ENCODE measurements at regions of chr11 and their contacts with region 1.

Region 1: DNA sequence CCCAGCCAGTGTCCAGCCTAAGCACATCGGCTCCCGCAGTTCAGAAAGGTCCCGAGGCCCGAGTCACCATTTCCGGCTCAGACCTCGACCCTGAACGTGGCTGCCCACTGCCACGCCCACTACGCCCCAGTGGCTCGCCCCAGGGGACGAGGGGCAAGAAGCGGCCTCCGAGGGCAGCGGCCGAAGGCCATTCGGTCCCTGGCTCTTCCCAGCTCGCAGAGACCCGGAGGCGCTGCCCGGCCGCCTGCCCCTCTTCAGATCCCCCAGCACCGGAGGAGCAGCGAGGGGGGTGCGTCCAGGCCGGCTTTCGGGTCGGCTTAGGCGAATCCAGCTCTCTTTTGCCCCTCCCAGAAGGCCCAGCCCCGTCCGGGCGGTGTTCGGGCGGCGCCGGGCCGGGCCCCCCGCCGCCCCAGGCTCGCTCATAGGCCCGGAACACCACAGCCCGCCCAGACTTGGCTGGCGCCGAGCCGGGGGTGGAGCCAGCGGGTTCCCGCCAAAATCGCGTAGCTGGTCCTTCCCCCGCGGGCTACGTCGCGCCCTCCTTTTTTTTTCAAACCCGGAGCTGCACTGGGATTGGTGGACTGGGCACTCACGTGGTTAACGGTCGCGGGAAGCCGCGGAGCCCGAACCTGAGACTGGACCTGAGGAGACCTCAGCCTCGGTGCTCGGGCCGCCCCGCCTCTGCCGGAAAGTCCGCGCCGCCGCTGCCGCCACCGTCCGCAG is at the start of gene WEE1:
- DNase-seq: peak; percentile 99
- H3K4me3 ChIP-seq: peak within 1 kb of the TSS; percentile 64 to 87 (median 86)
- H3K27ac ChIP-seq: peak within 1 kb of the TSS; percentile 95 to 99 (median 97)
- H3K4me1 ChIP-seq: peaks cover 0 to 39% (median 28%) of the 10 kb centered on the region in 4 donors
- H3K27me3 ChIP-seq: no peaks in the 10 kb centered on the region
- CTCF ChIP-seq: no peak
- EP300 ChIP-seq: no peak
- POLR2A ChIP-seq: peak; percentile 55 to 82
- total RNA-seq, gene WEE1: 32.4 to 38.8 (median 35.0) TPM

Region 2: DNA sequence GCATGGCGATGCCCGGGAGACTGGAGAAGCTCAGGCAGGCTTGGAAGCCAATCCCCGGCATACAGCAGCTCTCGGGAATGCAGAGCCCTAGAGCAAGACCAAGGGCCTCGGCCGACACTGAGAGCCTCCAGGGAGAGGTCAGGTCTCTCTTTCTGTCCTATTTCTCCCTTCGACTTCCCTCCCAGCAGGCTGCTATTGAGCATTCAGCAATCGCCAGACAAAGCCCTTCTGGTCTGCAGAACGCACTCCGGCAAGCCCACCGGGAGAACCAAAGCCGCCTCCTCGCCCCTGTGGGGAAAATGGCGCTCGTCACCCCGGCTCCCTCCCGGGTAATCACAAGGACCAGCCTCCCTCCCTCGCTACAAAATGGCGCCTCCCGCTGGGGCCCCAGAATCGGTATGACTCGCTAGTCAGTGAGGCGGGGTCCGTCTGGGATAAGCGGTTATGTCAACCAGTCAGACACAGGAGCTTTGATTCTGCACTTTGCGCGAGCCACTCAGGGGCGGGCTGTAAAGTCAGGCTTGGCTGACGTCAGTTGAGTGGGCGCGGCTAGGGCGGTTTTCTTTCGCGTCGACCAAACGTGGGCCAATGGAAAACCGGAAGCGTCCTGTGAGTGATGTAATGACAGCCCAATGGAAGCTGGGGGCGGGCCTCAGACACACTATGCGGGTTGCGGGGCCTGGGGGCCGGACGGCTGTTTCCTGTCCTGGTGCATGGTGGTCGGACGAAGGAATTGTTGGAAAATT is 112.7 kb before region 1 on chr11 and contains the start of gene ZNF143:
- intact Hi-C with region 1: loop called (anchors 2 kb)
- DNase-seq: peak; percentile 100
- H3K4me3 ChIP-seq: peak within 1 kb of the TSS; percentile 68 to 95 (median 82)
- H3K27ac ChIP-seq: peak within 1 kb of the TSS; percentile 95 to 100 (median 100)
- H3K4me1 ChIP-seq: peaks cover 0 to 27% (median 20%) of the 10 kb centered on the region in 4 donors
- H3K27me3 ChIP-seq: no peaks in the 10 kb centered on the region
- CTCF ChIP-seq: peak in 2 of 4 experiments; percentile 4 to 28
- EP300 ChIP-seq: peak in 1 of 4 donors; percentile 8
- POLR2A ChIP-seq: peak; percentile 99
- total RNA-seq, gene ZNF143: 20.2 to 48.4 (median 32.4) TPM

Region 3: GRCh38 chr11:9527481-9528140 is 45.6 kb before region 1 on chr11:
- intact Hi-C with region 1: loop called (anchors 5 kb)
- DNase-seq: peak; percentile 74
- H3K4me3 ChIP-seq: no peak overlapping the region
- H3K27ac ChIP-seq: peak overlapping the region; percentile 67 to 82 (median 74)
- H3K4me1 ChIP-seq: peaks cover 0 to 50% (median 38%) of the 10 kb centered on the region in 4 donors
- H3K27me3 ChIP-seq: no peaks in the 10 kb centered on the region
- CTCF ChIP-seq: no peak
- EP300 ChIP-seq: no peak
- POLR2A ChIP-seq: no peak